T-cell (primary cell): ENCODE measurements at regions of chr10 and their contacts with region 1.

Region 1: GRCh38 chr10:117496616-117497028 is 45.9 kb upstream of the EMX2 start:
- DNase-seq: peak; percentile 8 to 77 (median 55)
- ATAC-seq: peak; percentile 55 to 75 (median 66)
- H3K4me3 ChIP-seq: no peak overlapping the region
- H3K4me3 Mint-ChIP-seq: no peak overlapping the region
- H3K27ac ChIP-seq: no peak overlapping the region
- H3K27ac Mint-ChIP-seq: no peak overlapping the region
- H3K4me1 ChIP-seq: peaks cover 0 to 4% of the 10 kb centered on the region in 2 experiments
- H3K4me1 Mint-ChIP-seq: peaks cover 0 to 2% (median 0%) of the 10 kb centered on the region in 3 donors
- H3K27me3 ChIP-seq: peaks cover 0 to 25% of the 10 kb centered on the region in 2 experiments
- H3K27me3 Mint-ChIP-seq: peaks cover 32 to 48% of the 10 kb centered on the region in 2 donors

Region 2: GRCh38 chr10:118241229-118242137 is 744.9 kb after region 1 on chr10:
- CTCF ChIA-PET with region 1: interaction called, 17 to 64 read pairs
- POLR2A ChIA-PET with region 1: no interaction called
- DNase-seq: peak in 34 of 35 experiments; percentile 2 to 76 (median 46)
- ATAC-seq: no peak
- H3K4me3 ChIP-seq: no peak overlapping the region
- H3K4me3 Mint-ChIP-seq: no peak overlapping the region
- H3K27ac ChIP-seq: no peak overlapping the region
- H3K27ac Mint-ChIP-seq: no peak overlapping the region
- H3K4me1 ChIP-seq: no peaks in the 10 kb centered on the region
- H3K4me1 Mint-ChIP-seq: no peaks in the 10 kb centered on the region
- H3K27me3 ChIP-seq: peaks cover 17 to 26% of the 10 kb centered on the region in 2 experiments
- H3K27me3 Mint-ChIP-seq: peaks cover 48 to 58% of the 10 kb centered on the region in 2 donors

Region 3: DNA sequence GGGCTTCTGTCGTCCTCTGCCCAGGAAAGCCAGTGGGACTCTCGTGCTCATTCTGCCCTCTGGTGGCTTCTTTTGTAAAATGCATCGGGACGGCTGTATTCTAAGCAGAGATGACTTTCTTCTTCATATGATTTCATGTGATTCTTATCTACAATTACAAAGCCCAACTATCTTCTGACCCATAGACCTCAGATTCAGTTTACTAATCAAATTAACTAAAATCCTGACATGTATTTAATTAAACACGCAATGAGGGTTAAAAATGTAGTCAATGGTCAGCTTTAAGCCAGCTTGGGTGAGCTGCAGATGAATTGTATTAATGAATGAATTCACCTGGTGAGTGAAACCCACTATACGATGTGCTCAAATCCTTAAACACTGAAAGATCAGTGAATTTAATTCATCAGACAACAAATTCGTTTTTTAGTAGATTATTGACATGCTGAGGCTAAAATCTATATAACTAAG is 963.1 kb after region 1 on chr10:
- CTCF ChIA-PET with region 1: interaction called, 12 to 13 read pairs
- POLR2A ChIA-PET with region 1: no interaction called
- DNase-seq: peak in 31 of 35 experiments; percentile 1 to 62 (median 21)
- ATAC-seq: peak; percentile 53 to 75 (median 58)
- H3K4me3 ChIP-seq: no peak overlapping the region
- H3K4me3 Mint-ChIP-seq: peak overlapping the region; percentile 43 to 54 (median 50)
- H3K27ac ChIP-seq: no peak overlapping the region
- H3K27ac Mint-ChIP-seq: no peak overlapping the region
- H3K4me1 ChIP-seq: peaks cover 0 to 3% of the 10 kb centered on the region in 2 experiments
- H3K4me1 Mint-ChIP-seq: peaks cover 0 to 5% (median 0%) of the 10 kb centered on the region in 3 donors
- H3K27me3 ChIP-seq: peaks cover 2 to 12% of the 10 kb centered on the region in 2 experiments
- H3K27me3 Mint-ChIP-seq: peaks cover 36 to 37% of the 10 kb centered on the region in 2 donors